BJ (cell line): ENCODE measurements at regions of chr3 and their contacts with region 1.

Region 1: DNA sequence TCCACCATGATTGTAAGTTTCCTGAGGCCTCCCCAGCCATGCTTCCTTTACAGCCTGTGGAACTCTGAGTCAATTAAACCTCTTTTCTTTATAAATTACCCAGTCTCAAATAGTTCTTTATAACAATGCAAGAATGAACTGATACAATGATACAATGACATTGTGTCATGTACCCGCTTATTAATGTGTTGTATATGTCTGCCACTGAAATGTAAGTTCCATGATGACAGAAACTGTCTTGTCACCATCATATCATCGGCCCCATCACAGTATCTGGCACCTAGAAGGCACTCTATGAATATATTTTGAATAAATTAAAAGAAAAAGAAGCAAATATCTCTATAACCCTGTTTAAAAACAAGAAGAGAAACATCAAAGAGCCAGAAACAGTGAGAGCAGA is 29.6 kb downstream of the FEZF2 start:
- DNase-seq: no peak
- H3K4me3 ChIP-seq: no peak overlapping the region
- H3K27me3 ChIP-seq: no peaks in the 10 kb centered on the region
- CTCF ChIP-seq: no peak

Region 2: DNA sequence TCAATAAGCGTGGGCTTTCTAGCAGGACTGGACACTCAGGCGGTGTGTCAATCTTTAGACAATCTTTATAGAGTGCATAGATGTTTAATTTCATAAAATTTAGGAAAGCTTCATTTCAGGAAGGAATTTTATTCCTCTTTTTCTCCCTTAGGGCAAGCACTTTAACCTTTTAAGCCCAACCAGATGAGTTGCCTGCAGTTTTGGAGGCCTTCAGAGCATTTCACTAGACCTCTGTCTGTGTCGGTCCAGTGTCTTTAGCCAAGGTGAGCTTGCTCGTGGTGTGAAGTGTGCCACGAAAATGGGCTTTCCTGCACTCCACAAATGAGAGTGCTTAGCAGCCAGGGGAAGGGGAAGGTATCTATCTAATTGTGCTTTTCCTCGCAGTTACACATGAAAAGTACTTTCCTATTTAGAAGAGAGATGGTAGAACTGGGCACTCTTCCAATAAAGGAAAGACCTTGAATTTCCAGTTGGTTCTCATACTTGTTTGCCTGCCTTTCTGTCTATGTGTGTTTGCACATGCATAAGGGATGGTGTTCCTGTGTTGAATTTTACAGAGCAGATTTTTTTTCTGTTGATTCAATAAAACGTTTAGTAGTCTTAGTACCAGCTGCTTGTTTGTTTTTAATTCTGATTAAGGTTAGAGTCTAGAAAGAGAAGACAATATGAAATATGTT is 24.0 kb before region 1 on chr3:
- CTCF ChIA-PET with region 1: no interaction called
- POLR2A ChIA-PET with region 1: interaction called, 11 read pairs
- DNase-seq: no peak
- H3K4me3 ChIP-seq: peak overlapping the region; percentile 85
- H3K27me3 ChIP-seq: no peaks in the 10 kb centered on the region
- CTCF ChIP-seq: no peak